K562 (cell line): ENCODE measurements at regions of chr20 and their contacts with region 1.

Region 1: GRCh38 chr20:44747166-44748004 is 1.7 kb downstream of the KCNK15 start:
- DNase-seq: peak; percentile 65 to 75 (median 74)
- ATAC-seq: peak; percentile 82
- H3K4me3 ChIP-seq: no peak overlapping the region
- H3K27ac ChIP-seq: no peak overlapping the region
- H3K4me1 ChIP-seq: peaks cover 3 to 22% of the 10 kb centered on the region in 2 experiments; a peak in 4 of 5 replicates
- H3K27me3 ChIP-seq: peaks cover 5 to 49% of the 10 kb centered on the region in 2 experiments; a peak in 4 of 5 replicates
- CTCF ChIP-seq: peak; percentile 68 to 87 (median 76)
- EP300 ChIP-seq: no peak
- POLR2A ChIP-seq: no peak
- RAD21 ChIP-seq: peak; percentile 25 to 55; a peak in 3 of 4 replicates

Region 2: DNA sequence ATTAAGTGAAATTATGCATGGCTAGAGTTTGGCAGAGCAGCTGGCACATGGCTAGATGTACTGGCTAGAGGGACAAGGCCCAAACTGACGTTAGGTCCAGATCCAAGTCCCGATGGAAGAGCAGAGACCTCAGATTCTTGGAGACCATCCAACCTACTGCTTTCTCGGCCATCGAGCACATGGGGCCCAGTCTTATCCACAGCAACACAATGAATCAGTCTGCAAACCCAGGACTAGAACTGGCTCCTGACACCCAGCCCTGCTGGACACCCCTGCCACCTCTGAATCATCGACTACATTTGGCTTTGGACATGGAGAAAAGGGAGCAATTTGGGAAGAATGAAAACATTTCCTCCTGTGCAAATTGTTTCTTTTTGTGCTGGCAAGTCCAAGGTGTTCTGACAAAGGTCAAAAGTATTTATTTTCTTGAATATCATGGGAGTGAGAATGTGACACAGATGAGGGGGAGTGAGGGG is 114.2 kb after region 1 on chr20:
- CTCF ChIA-PET with region 1: interaction called, 19 read pairs
- POLR2A ChIA-PET with region 1: no interaction called
- in situ Hi-C with region 1: loop called (anchors 10 kb)
- intact Hi-C with region 1: no loop called
- DNase-seq: peak in 1 of 4 experiments; percentile 13
- ATAC-seq: no peak
- H3K4me3 ChIP-seq: no peak overlapping the region
- H3K27ac ChIP-seq: no peak overlapping the region
- H3K4me1 ChIP-seq: no peaks in the 10 kb centered on the region; a peak in 2 of 5 replicates
- H3K27me3 ChIP-seq: no peaks in the 10 kb centered on the region; a peak in 1 of 5 replicates
- CTCF ChIP-seq: no peak
- EP300 ChIP-seq: no peak
- POLR2A ChIP-seq: no peak
- RAD21 ChIP-seq: no peak